Cardiac septum (tissue), 1 donor: ENCODE measurements at regions of chr3 and their contacts with region 1.

Region 1: GRCh38 chr3:34683851-34684250 is 885.4 kb downstream of the PDCD6IP start:
- DNase-seq: peak; percentile 77

Region 2: GRCh38 chr3:33883538-33883950 is 800.3 kb before region 1 on chr3:
- intact Hi-C with region 1: loop called (anchors 2 kb)
- DNase-seq: no peak

Region 3: DNA sequence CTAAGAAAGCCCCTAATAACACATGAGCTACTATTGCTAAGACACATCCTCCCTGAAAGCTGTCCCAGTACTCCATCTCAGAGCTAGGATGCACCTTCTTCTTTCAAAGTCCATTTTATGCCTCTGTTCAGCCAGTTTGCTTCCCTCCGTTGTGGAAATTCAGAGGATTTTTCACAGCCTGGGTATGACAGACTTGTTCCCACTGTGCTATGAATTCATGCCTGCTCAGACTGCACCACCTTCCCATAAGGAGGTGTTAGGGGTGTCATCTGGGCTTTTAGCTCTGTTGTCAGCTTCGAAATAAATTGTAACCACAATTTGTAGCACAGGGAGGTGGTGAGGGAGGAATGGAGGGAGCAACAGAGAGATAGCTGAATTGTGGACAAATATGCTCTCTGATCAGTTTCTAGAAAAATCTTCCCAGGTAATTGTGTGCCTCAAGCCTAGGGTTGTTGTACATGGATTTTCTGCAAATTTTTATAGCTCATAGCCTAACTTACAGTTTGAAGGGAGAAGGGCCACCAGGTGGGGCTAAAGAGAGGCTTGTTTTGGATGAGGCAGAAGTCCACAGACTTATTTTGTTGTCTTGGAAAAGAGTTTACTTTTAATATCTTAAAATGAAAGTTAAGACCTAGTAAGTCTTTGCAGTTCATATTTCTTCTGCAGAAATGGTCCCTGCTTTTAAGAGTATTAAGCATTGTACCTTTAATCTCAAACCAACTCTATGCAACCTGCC is 423.4 kb before region 1 on chr3:
- intact Hi-C with region 1: loop called (anchors 2 kb)
- DNase-seq: no peak